ENCODE measurements at regions of chr16 and their contacts with region 1.

Region 1: GRCh38 chr16:56874800-56875199 is 9.8 kb downstream of the SLC12A3 start:
- DNase-seq: peak; percentile 90
- H3K4me3 ChIP-seq: no peak overlapping the region
- H3K27ac ChIP-seq: peak overlapping the region; percentile 15 to 91; a peak in 2 of 4 replicates
- H3K4me1 ChIP-seq: peaks cover 0 to 35% of the 10 kb centered on the region in 2 experiments; a peak in 1 of 4 replicates
- H3K27me3 ChIP-seq: no peaks in the 10 kb centered on the region
- CTCF ChIP-seq: no peak
- EP300 ChIP-seq: peak in 1 of 2 experiments; percentile 91; a peak in 2 of 4 replicates
- RAD21 ChIP-seq: peak; percentile 41

Region 2: DNA sequence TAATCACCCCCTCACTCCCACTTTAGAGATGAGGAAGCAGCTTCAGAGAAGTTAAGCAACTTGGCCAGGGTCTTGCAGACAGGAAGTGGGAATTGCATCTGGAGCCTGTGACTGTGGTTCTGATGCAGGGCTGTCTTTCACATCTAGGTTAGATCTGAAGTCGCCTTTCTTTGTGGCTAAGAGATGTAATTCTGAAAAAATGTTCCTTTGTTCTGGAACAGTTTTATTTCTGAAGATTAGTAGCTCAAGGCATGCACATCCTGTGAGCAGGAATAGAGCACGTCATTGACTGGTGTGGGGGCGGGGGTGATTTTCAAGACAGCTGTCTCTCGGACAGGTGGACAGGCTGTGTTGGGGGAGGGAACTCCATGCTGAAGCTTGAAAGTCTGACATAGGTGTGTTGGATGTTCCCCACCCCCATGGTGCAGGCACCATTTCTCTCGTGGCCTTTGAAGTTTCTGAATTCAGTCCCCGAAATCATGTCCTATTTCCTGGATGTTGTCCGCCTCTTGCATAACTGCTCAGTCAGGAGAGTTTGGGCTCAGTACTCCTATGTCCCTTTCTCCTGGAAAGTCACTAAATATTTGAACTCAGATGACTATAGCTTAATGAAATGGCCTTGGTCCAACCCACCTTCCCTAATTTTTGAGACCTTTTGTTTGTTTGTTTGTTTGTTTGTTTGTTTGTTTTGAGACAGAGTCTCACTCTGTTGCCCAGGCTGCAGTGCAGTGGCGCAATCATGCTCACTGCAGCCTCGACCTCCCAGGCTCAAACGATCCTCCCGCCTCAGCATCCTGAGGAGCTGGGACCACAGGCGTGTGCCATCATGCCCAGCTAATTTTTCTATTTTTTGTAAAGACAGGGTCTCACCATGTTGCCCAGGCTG is 36.1 kb after region 1 on chr16:
- CTCF ChIA-PET with region 1: no interaction called
- POLR2A ChIA-PET with region 1: no interaction called
- DNase-seq: no peak
- H3K4me3 ChIP-seq: no peak overlapping the region
- H3K27ac ChIP-seq: peak overlapping the region in 1 of 2 experiments; percentile 48; a peak in 2 of 4 replicates
- H3K4me1 ChIP-seq: peaks cover 0 to 20% of the 10 kb centered on the region in 2 experiments; a peak in 2 of 4 replicates
- H3K27me3 ChIP-seq: no peaks in the 10 kb centered on the region
- CTCF ChIP-seq: no peak
- EP300 ChIP-seq: no peak
- RAD21 ChIP-seq: no peak

Region 3: GRCh38 chr16:56931892-56932720 is 57.3 kb after region 1 on chr16 and contains the start of gene HERPUD1:
- CTCF ChIA-PET with region 1: interaction called, 8 read pairs
- POLR2A ChIA-PET with region 1: interaction called, 43 read pairs
- DNase-seq: peak; percentile 99
- H3K4me3 ChIP-seq: peak within 1 kb of the TSS; percentile 84 to 99
- H3K27ac ChIP-seq: peak within 1 kb of the TSS; percentile 69 to 90
- H3K4me1 ChIP-seq: peaks cover 18 to 32% of the 10 kb centered on the region in 2 experiments; a peak in 3 of 4 replicates
- H3K27me3 ChIP-seq: no peaks in the 10 kb centered on the region
- CTCF ChIP-seq: peak; percentile 18
- EP300 ChIP-seq: peak in 1 of 2 experiments; percentile 23; a peak in 1 of 4 replicates
- RAD21 ChIP-seq: peak; percentile 4; the same call in 1 of the 2 replicates
- polyA plus RNA-seq, gene HERPUD1: 46.3 and 71.1 TPM in 2 replicates

Region 4: DNA sequence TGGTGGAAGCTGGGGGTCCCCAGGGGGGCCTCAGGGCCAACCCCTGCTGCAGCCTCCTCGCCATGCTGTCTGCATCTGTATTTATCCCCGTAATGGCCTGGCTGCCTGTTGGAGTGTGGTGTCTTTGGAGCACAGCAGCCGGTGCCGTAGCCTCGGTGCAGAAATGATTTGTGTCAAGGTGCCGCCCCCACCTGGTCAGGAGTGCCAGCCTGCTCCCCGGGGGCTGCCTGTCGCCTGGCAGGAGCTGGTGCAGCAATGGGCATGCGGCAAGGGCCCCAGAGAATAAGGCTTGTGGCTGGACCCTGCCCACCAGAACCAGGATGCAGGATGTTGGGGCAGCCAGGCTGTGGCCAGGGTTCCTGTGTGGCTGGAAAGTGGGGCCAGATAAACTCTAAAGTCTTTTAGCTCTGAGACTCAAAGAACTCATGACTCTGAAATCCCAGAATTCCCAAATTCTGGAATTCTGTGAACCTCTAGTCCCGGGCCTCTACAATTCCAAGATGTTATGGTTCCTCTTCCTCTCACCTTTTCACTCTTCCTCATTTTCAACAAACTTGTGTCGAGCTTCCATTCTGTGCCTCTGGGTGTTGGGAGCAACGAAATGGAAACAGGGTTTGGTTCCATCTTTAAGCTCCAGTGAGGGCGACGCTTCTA is 223.5 kb after region 1 on chr16:
- CTCF ChIA-PET with region 1: no interaction called
- POLR2A ChIA-PET with region 1: no interaction called
- DNase-seq: no peak
- H3K4me3 ChIP-seq: no peak overlapping the region
- H3K27ac ChIP-seq: no peak overlapping the region
- H3K4me1 ChIP-seq: peaks cover 3 to 16% of the 10 kb centered on the region in 2 experiments; a peak in 1 of 4 replicates
- H3K27me3 ChIP-seq: no peaks in the 10 kb centered on the region
- CTCF ChIP-seq: no peak
- EP300 ChIP-seq: no peak
- RAD21 ChIP-seq: no peak

Measured in SK-N-SH (cell line).